Left ventricle myocardium inferior (tissue), 1 donor: ENCODE measurements at regions of chr13 and their contacts with region 1.

Region 1: DNA sequence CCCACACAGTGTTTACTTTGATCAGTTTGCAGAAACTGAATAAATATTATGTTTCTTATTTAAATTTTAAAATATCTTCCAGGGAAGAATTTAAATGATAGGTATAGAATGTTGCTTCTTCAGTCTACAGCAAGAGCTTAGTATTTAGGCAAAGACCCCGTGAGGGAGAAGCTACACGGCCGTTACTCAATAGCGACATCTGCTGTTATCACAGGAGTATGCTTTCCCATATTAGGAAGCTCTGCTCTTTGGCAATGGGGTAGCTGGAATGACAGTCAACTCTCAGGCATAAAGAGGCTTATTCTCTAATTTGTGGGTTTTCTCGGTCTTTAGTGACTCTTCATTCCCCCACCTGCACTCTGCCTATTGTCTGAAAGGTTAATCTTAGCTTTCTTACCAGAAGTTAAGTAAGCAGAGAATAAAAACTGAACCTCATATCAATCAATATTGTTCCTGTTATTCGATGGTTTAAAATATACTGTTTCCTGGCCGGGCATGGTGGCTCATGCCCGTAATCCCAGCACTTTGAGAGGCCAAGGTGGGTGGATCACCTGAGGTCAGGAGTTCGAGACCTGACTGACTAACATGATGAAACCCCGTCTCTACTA is 13.2 kb upstream of the LHFPL6 start:
- DNase-seq: no peak
- H3K4me3 ChIP-seq: no peak overlapping the region
- H3K27ac ChIP-seq: no peak overlapping the region
- H3K4me1 ChIP-seq: peaks cover 6% of the 10 kb centered on the region
- H3K27me3 ChIP-seq: no peaks in the 10 kb centered on the region
- CTCF ChIP-seq: peak; percentile 95

Region 2: DNA sequence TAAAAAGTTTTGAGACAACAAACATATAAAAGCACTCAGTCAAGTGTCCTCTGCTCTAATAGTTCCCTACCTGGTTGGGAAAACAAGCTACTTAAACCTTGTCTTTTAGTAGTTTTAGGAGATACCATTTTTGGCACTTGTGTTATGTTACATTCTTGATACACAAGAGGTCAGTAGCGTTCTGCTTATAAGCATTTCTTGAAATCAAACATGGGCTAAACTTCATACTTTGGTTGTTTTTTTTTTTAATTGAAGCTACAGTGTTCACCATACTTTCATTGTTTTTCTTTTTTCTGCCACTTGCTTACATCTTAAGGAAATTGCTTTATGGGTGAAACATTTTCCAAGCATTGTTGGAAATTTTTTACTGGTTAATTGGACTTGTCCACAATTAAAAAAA is 565.0 kb before region 1 on chr13:
- intact Hi-C with region 1: loop called (anchors 5 kb)
- DNase-seq: no peak
- H3K4me3 ChIP-seq: no peak overlapping the region
- H3K27ac ChIP-seq: no peak overlapping the region
- H3K4me1 ChIP-seq: no peaks in the 10 kb centered on the region
- H3K27me3 ChIP-seq: no peaks in the 10 kb centered on the region
- CTCF ChIP-seq: peak; percentile 70

Region 3: DNA sequence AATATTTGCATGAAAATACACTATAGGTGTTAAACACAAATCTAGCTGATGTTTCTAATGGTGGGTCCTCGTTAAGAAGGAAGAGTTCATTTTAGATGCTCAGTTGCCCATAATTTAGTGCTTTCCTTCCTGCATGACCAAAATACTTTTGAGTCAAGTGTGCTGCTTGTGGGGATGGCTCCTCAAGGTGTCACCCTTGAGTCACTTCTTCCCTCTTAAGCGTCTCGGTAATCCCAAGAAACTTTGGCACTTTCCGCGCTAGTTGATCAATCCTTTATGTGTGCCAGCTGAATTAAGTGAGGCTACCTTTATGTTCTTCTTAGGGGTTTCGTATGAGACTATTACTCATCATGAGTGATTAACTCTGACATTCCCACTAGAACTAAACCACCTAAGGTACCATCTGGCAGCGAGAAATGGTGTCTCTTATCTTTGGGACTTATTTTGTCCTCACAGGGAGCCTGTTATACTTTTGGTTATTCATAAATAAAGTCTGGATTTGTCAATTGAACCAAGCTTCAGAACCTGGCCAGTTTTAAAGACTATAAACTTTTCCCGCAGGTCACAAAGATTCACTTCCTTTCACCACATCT is 471.2 kb before region 1 on chr13:
- intact Hi-C with region 1: loop called (anchors 5 kb)
- DNase-seq: peak; percentile 40
- H3K4me3 ChIP-seq: peak overlapping the region; percentile 48
- H3K27ac ChIP-seq: peak overlapping the region; percentile 51
- H3K4me1 ChIP-seq: peaks cover 17% of the 10 kb centered on the region
- H3K27me3 ChIP-seq: no peaks in the 10 kb centered on the region
- CTCF ChIP-seq: peak; percentile 89

Region 4: GRCh38 chr13:39263033-39263432 is 353.2 kb before region 1 on chr13:
- intact Hi-C with region 1: loop called (anchors 5 kb)
- DNase-seq: no peak
- H3K4me3 ChIP-seq: no peak overlapping the region
- H3K27ac ChIP-seq: peak overlapping the region; percentile 79
- H3K4me1 ChIP-seq: peaks cover 56% of the 10 kb centered on the region
- H3K27me3 ChIP-seq: no peaks in the 10 kb centered on the region
- CTCF ChIP-seq: peak; percentile 84